Ascending aorta (tissue), 2 donors: ENCODE measurements at regions of chr2 and their contacts with region 1.

Region 1: GRCh38 chr2:63588385-63589147 is at the starts of genes MDH1 and WDPCP:
- DNase-seq: peak; percentile 90 to 97
- H3K4me3 ChIP-seq: peak within 1 kb of the TSS; percentile 66 to 83
- H3K27ac ChIP-seq: peak within 1 kb of the TSS; percentile 88
- H3K4me1 ChIP-seq: peaks cover 5 to 16% of the 10 kb centered on the region in 2 donors
- H3K27me3 ChIP-seq: no peaks in the 10 kb centered on the region
- CTCF ChIP-seq: no peak
- total RNA-seq, gene MDH1: 65.7 TPM
- total RNA-seq, gene WDPCP: 5.2 TPM

Region 2: DNA sequence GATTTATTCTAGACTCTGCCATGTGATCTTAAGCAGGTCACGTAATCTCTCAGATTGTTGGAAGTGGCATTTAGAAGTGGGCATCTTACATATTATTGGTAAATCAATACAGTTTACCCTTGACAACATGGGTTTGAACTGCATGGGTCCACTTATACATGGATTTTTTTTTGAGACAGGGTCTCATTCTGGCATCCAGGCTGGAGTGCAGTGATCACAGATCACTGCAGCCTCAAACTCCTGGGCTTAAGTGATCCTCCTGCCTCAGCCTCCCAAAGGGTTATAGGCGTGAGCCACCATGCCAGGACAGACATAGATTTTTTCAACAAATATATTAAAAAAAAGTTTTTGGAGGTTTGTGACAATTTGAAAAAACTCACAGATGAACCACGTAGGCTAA is 393.3 kb before region 1 on chr2:
- intact Hi-C with region 1: no loop called
- DNase-seq: no peak
- H3K4me3 ChIP-seq: no peak overlapping the region
- H3K27ac ChIP-seq: no peak overlapping the region
- H3K4me1 ChIP-seq: no peaks in the 10 kb centered on the region
- H3K27me3 ChIP-seq: no peaks in the 10 kb centered on the region
- CTCF ChIP-seq: no peak

Region 3: DNA sequence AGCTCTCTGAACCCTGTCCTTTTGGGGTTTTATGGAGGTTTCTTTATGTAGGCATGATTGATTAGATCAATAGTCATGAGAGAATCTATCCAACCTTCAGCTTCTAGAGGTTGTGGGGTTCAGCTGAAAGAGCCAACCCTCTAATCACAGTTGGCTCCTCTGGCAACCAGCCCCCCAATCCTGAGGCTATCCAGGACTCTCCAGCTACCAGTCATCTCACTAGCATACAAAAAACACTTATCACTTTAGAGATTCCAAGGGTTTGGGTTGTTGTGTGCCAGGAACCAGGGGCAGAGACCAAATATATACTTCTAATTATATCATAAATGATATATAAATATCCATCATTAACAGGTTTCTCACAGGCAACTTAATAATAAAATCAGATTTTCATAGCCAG is 12.0 kb before region 1 on chr2:
- intact Hi-C with region 1: no loop called
- DNase-seq: no peak
- H3K4me3 ChIP-seq: no peak overlapping the region
- H3K27ac ChIP-seq: no peak overlapping the region
- H3K4me1 ChIP-seq: no peaks in the 10 kb centered on the region
- H3K27me3 ChIP-seq: no peaks in the 10 kb centered on the region
- CTCF ChIP-seq: no peak

Region 4: GRCh38 chr2:63875131-63875527 is 286.6 kb after region 1 on chr2:
- intact Hi-C with region 1: loop called (anchors 10 kb)
- DNase-seq: no peak
- H3K4me3 ChIP-seq: no peak overlapping the region
- H3K27ac ChIP-seq: peak overlapping the region; percentile 72 to 75
- H3K4me1 ChIP-seq: peaks cover 3 to 29% of the 10 kb centered on the region in 2 donors
- H3K27me3 ChIP-seq: no peaks in the 10 kb centered on the region
- CTCF ChIP-seq: no peak

Region 5: GRCh38 chr2:64234785-64235184 is 646.2 kb after region 1 on chr2:
- intact Hi-C with region 1: no loop called
- DNase-seq: no peak
- H3K4me3 ChIP-seq: no peak overlapping the region
- H3K27ac ChIP-seq: no peak overlapping the region
- H3K4me1 ChIP-seq: no peaks in the 10 kb centered on the region
- H3K27me3 ChIP-seq: no peaks in the 10 kb centered on the region
- CTCF ChIP-seq: no peak

Region 6: GRCh38 chr2:65056215-65057053 is 1467.9 kb after region 1 on chr2 and contains the start of gene CEP68:
- intact Hi-C with region 1: loop called (anchors 5 kb)
- DNase-seq: peak; percentile 85 to 98
- H3K4me3 ChIP-seq: peak within 1 kb of the TSS; percentile 82 to 94
- H3K27ac ChIP-seq: peak within 1 kb of the TSS; percentile 78 to 86
- H3K4me1 ChIP-seq: peaks cover 4 to 30% of the 10 kb centered on the region in 2 donors
- H3K27me3 ChIP-seq: no peaks in the 10 kb centered on the region
- CTCF ChIP-seq: no peak
- total RNA-seq, gene CEP68: 30.8 TPM

Region 7: GRCh38 chr2:65227425-65228262 is 1639.1 kb after region 1 on chr2 and contains the start of gene ACTR2:
- intact Hi-C with region 1: loop called (anchors 5 kb)
- DNase-seq: peak; percentile 86 to 98
- H3K4me3 ChIP-seq: peak within 1 kb of the TSS; percentile 66 to 100
- H3K27ac ChIP-seq: peak within 1 kb of the TSS; percentile 89 to 100
- H3K4me1 ChIP-seq: peaks cover 3 to 36% of the 10 kb centered on the region in 2 donors
- H3K27me3 ChIP-seq: no peaks in the 10 kb centered on the region
- CTCF ChIP-seq: no peak
- total RNA-seq, gene ACTR2: 78.0 TPM